PC-9 (cell line): ENCODE measurements at regions of chr12 and their contacts with region 1.

Region 1: GRCh38 chr12:69732088-69732487 is 6.6 kb upstream of the RAB3IP start:
- DNase-seq: peak; percentile 18 to 61
- H3K4me3 ChIP-seq: no peak overlapping the region
- H3K27ac ChIP-seq: no peak overlapping the region
- H3K4me1 ChIP-seq: peaks cover 9% of the 10 kb centered on the region
- H3K27me3 ChIP-seq: no peaks in the 10 kb centered on the region
- CTCF ChIP-seq: no peak

Region 2: DNA sequence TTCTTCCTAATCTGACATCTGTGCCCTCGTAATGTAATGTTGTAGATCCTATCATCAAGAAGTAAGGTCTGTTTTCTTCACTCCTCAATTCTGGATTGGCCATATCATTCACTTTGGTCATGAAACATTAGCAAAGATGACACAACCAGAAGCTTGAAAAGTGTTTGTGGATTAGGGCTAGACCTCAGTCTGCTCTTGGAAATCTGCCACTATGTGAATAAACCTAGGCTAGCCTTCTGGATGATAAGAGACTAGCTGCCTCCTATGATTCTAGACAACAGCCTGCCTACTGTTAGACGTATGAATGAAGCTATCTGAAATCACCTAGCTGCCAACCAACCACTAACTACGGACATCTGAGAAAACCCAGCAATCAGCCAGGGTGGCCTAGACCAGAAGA is 422.6 kb before region 1 on chr12:
- CTCF ChIA-PET with region 1: no interaction called
- POLR2A ChIA-PET with region 1: no interaction called
- intact Hi-C with region 1: no loop called
- DNase-seq: no peak
- H3K4me3 ChIP-seq: no peak overlapping the region
- H3K27ac ChIP-seq: no peak overlapping the region
- H3K4me1 ChIP-seq: no peaks in the 10 kb centered on the region
- H3K27me3 ChIP-seq: no peaks in the 10 kb centered on the region
- CTCF ChIP-seq: no peak

Region 3: GRCh38 chr12:69688496-69689427 is 43.3 kb before region 1 on chr12:
- CTCF ChIA-PET with region 1: no interaction called
- POLR2A ChIA-PET with region 1: no interaction called
- intact Hi-C with region 1: loop called (anchors 5 kb)
- DNase-seq: peak; percentile 76 to 81
- H3K4me3 ChIP-seq: no peak overlapping the region; the same call in 1 of the 2 replicates
- H3K27ac ChIP-seq: peak overlapping the region; percentile 72
- H3K4me1 ChIP-seq: peaks cover 21% of the 10 kb centered on the region
- H3K27me3 ChIP-seq: no peaks in the 10 kb centered on the region
- CTCF ChIP-seq: no peak

Region 4: GRCh38 chr12:70609711-70610491 is 877.8 kb after region 1 on chr12:
- CTCF ChIA-PET with region 1: no interaction called
- POLR2A ChIA-PET with region 1: no interaction called
- intact Hi-C with region 1: no loop called
- DNase-seq: peak in 1 of 2 experiments; percentile 34
- H3K4me3 ChIP-seq: peak overlapping the region; percentile 65
- H3K27ac ChIP-seq: no peak overlapping the region
- H3K4me1 ChIP-seq: peaks cover 6% of the 10 kb centered on the region; the same call in 1 of the 2 replicates
- H3K27me3 ChIP-seq: no peaks in the 10 kb centered on the region
- CTCF ChIP-seq: no peak